ENCODE measurements at regions of chr3 and their contacts with region 1.

Region 1: DNA sequence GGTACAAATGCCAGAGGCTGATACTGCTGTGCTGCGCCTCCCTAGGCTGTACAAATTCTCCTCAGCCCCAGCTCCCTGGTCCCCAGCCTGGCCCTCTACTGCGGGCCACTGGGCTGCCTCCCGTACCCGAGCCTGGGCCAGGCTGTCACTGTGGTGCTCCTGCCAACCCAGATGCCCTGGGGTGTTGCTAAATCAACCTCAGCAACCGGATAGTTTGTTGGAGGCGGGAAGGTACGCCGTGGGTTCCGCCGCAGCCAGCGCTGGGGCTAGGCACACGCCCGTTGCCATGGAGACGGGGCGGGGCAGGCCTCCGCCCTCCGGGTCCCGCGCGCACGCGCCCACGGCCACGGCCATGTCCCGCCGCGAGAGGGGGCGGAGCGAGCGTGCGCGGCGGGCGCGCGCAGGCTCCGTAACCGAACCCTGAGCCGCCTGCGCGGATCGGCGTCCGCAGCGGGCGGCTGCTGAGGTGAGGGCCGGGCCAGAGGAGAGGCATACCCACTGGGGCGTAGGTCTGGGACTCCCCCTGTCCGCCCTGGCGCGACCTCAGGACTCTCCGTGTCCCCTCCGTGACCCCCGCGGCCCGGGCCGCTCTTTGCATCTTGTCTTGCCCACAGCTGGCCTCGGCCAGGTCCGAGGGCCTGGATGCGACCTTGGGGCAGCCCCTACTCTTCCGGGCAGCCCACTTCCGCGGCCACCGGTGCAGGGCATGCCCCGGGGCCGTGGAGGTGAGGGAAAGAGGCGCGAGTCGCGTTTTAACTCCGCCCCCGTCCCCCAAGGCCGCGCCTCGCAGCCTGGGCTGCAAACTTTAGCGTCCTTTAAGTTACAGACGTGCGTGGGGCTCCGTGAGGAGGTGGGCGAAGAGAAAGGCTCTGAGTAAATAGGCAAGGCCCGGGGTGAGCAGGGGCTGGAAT is at the start of gene TEX264:
- DNase-seq: no peak
- H3K4me3 ChIP-seq: peak within 1 kb of the TSS; percentile 81
- H3K27ac ChIP-seq: no peak within 1 kb of the TSS
- H3K27me3 ChIP-seq: no peaks in the 10 kb centered on the region
- CTCF ChIP-seq: no peak
- polyA plus RNA-seq, gene TEX264: 40.6 and 49.9 TPM in 2 replicates

Region 2: GRCh38 chr3:51391075-51391567 is 280.0 kb before region 1 on chr3 and contains the start of gene RBM15B:
- CTCF ChIA-PET with region 1: interaction called, 18 read pairs
- POLR2A ChIA-PET with region 1: no interaction called
- DNase-seq: peak; percentile 89
- H3K4me3 ChIP-seq: peak within 1 kb of the TSS; percentile 72
- H3K27ac ChIP-seq: peak within 1 kb of the TSS; percentile 43
- H3K27me3 ChIP-seq: no peaks in the 10 kb centered on the region
- CTCF ChIP-seq: no peak; the same call in 1 of the 2 replicates
- polyA plus RNA-seq, gene RBM15B: 12.5 and 17.0 TPM in 2 replicates

Region 3: DNA sequence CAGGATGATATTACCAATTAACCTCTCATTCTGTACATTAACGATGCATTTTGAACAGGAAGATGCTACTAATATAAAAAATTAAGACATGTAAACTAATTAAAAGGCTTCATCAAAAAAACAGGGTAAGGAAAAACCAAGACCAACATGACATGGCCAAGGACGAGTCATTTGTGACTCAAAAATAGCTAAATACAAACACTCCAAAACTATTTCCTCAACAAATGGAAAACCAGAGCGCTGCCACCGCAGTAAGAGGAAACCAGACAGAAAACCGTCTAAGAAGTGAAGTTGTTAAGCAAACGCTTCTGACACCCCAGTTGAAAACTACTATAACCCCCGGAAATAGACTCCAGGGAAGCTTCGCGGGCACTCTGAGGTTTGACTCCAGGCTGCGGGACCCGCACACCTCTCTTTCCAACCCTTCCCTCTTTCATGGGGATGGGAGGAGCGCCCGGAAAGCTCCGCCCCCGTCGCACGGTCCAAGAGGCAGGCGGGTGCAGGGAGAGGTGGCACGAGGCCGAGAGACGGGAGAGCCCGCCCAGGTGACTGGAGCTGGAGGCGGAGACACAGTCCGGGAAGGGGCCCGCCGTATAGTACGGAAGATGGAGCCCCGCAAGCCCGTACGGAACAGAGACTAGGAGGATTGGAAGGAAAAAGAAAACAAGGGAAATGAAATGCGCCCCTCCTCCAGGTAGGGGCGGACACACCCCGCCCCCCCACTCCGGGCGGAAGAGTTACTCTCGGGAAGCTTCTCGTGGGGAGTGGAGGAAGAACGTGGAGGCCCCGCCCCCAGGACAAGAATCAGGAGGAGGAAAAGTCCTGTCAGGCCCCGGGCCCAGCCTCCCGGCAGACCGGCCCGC is 172.0 kb before region 1 on chr3:
- CTCF ChIA-PET with region 1: interaction called, 224 read pairs
- POLR2A ChIA-PET with region 1: interaction called, 20 read pairs
- DNase-seq: peak; percentile 81
- H3K4me3 ChIP-seq: peak overlapping the region; percentile 78
- H3K27ac ChIP-seq: peak overlapping the region; percentile 88
- H3K27me3 ChIP-seq: no peaks in the 10 kb centered on the region
- CTCF ChIP-seq: no peak

Region 4: GRCh38 chr3:51637941-51638471 is 33.1 kb before region 1 on chr3:
- CTCF ChIA-PET with region 1: interaction called, 30 read pairs
- POLR2A ChIA-PET with region 1: no interaction called
- DNase-seq: peak; percentile 39
- H3K4me3 ChIP-seq: no peak overlapping the region
- H3K27ac ChIP-seq: peak overlapping the region; percentile 21
- H3K27me3 ChIP-seq: no peaks in the 10 kb centered on the region
- CTCF ChIP-seq: peak; percentile 94

Region 5: DNA sequence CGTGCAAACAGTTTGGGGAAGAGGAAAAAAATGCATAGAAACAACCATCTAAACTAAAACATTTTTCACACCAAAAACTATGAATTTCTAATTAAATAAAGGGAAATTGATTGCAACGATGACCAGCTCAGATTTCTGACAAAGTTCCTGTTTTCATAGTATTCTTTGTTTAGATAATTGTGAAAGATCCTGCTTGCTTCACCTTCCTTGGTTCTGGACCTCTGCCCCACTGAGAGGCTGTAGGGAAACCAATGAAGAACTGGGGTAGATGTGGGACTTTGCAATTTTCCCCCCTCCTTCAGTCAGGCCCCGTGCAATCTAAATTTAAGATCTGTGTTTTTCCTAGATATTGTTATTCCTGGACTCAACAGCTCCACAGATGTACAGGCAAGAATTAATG is 13.8 kb before region 1 on chr3:
- CTCF ChIA-PET with region 1: interaction called, 33 read pairs
- POLR2A ChIA-PET with region 1: no interaction called
- DNase-seq: no peak
- H3K4me3 ChIP-seq: no peak overlapping the region
- H3K27ac ChIP-seq: no peak overlapping the region
- H3K27me3 ChIP-seq: no peaks in the 10 kb centered on the region
- CTCF ChIP-seq: no peak

Measured in AG04450 (cell line).